ENCODE measurements at regions of chr5 and their contacts with region 1.

Region 1: DNA sequence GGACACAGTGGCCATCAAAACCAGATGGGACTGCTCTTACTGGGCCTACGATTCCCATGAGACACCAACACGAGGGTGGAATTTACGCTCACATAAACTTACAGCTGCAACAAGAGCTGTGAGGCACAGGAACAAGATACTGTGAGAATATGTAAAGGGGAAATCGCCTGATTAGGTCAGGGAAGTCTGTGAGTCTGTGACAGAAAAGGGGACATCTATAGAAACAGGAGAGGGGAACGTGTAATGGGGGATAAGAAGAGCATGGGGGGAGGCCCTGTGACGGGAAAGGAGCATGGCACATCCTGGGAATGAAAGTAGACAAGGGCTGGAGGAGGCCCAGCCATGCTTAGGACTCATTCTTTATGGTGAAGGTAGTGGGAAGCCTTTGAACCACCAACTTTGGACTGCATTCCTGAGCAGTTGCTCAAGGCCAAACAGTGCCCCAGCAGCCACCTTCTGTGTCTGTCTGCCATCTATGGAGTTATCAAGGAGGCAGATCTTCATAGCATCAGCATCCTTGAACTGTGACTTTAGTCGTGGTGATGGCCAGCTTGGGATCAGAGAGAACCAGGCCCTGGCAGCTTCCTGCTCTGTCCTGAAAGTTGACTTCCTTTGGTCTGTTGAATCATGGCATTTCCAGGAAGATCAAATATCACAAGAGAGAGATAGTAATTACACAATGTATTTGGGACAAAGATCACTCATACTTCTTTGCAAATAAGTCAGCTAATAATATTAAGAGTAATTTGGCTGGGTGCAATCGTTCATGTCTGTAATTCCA is 87.9 kb upstream of the FAM169A start:
- DNase-seq: peak; percentile 52 to 85
- H3K4me3 ChIP-seq: no peak overlapping the region
- H3K4me3 Mint-ChIP-seq: peak overlapping the region; percentile 30
- H3K27ac Mint-ChIP-seq: peak overlapping the region; percentile 91
- H3K4me1 ChIP-seq: peaks cover 86% of the 10 kb centered on the region
- H3K4me1 Mint-ChIP-seq: peaks cover 71% of the 10 kb centered on the region
- H3K27me3 ChIP-seq: no peaks in the 10 kb centered on the region
- H3K27me3 Mint-ChIP-seq: no peaks in the 10 kb centered on the region
- CTCF ChIP-seq: no peak

Region 2: GRCh38 chr5:74916831-74917710 is 37.1 kb before region 1 on chr5:
- CTCF ChIA-PET with region 1: no interaction called
- POLR2A ChIA-PET with region 1: no interaction called
- intact Hi-C with region 1: loop called (anchors 2 kb)
- DNase-seq: peak; percentile 76 to 80
- H3K4me3 ChIP-seq: no peak overlapping the region
- H3K4me3 Mint-ChIP-seq: peak overlapping the region; percentile 1
- H3K27ac Mint-ChIP-seq: peak overlapping the region; percentile 2
- H3K4me1 ChIP-seq: peaks cover 10% of the 10 kb centered on the region
- H3K4me1 Mint-ChIP-seq: peaks cover 25% of the 10 kb centered on the region
- H3K27me3 ChIP-seq: no peaks in the 10 kb centered on the region
- H3K27me3 Mint-ChIP-seq: no peaks in the 10 kb centered on the region
- CTCF ChIP-seq: no peak

Region 3: GRCh38 chr5:75037135-75037534 is 83.0 kb after region 1 on chr5:
- CTCF ChIA-PET with region 1: no interaction called
- POLR2A ChIA-PET with region 1: interaction called, 4 read pairs
- intact Hi-C with region 1: loop called (anchors 1 kb)
- DNase-seq: peak; percentile 85 to 91
- H3K4me3 ChIP-seq: no peak overlapping the region
- H3K4me3 Mint-ChIP-seq: peak overlapping the region; percentile 5
- H3K27ac Mint-ChIP-seq: peak overlapping the region; percentile 46
- H3K4me1 ChIP-seq: peaks cover 21% of the 10 kb centered on the region
- H3K4me1 Mint-ChIP-seq: peaks cover 22% of the 10 kb centered on the region
- H3K27me3 ChIP-seq: no peaks in the 10 kb centered on the region
- H3K27me3 Mint-ChIP-seq: no peaks in the 10 kb centered on the region
- CTCF ChIP-seq: no peak

Region 4: GRCh38 chr5:75167345-75167744 is 213.2 kb after region 1 on chr5:
- CTCF ChIA-PET with region 1: no interaction called
- POLR2A ChIA-PET with region 1: interaction called, 3 read pairs
- intact Hi-C with region 1: loop called (anchors 1 kb)
- DNase-seq: peak in 1 of 2 experiments; percentile 13
- H3K4me3 ChIP-seq: no peak overlapping the region
- H3K4me3 Mint-ChIP-seq: no peak overlapping the region
- H3K27ac Mint-ChIP-seq: no peak overlapping the region
- H3K4me1 ChIP-seq: peaks cover 19% of the 10 kb centered on the region
- H3K4me1 Mint-ChIP-seq: peaks cover 17% of the 10 kb centered on the region
- H3K27me3 ChIP-seq: no peaks in the 10 kb centered on the region
- H3K27me3 Mint-ChIP-seq: no peaks in the 10 kb centered on the region
- CTCF ChIP-seq: peak in 1 of 2 experiments; percentile 19